Gastrocnemius medialis (tissue), 4 donors: ENCODE measurements at regions of chr21 and their contacts with region 1.

Region 1: GRCh38 chr21:42456457-42456856 is 39.6 kb downstream of the RSPH1 start:
- DNase-seq: no peak
- ATAC-seq: no peak
- H3K4me3 ChIP-seq: no peak overlapping the region
- H3K27ac ChIP-seq: no peak overlapping the region
- H3K4me1 ChIP-seq: no peaks in the 10 kb centered on the region
- H3K27me3 ChIP-seq: peaks cover 0 to 7% (median 0%) of the 10 kb centered on the region in 3 donors
- CTCF ChIP-seq: no peak
- POLR2A ChIP-seq: no peak

Region 2: DNA sequence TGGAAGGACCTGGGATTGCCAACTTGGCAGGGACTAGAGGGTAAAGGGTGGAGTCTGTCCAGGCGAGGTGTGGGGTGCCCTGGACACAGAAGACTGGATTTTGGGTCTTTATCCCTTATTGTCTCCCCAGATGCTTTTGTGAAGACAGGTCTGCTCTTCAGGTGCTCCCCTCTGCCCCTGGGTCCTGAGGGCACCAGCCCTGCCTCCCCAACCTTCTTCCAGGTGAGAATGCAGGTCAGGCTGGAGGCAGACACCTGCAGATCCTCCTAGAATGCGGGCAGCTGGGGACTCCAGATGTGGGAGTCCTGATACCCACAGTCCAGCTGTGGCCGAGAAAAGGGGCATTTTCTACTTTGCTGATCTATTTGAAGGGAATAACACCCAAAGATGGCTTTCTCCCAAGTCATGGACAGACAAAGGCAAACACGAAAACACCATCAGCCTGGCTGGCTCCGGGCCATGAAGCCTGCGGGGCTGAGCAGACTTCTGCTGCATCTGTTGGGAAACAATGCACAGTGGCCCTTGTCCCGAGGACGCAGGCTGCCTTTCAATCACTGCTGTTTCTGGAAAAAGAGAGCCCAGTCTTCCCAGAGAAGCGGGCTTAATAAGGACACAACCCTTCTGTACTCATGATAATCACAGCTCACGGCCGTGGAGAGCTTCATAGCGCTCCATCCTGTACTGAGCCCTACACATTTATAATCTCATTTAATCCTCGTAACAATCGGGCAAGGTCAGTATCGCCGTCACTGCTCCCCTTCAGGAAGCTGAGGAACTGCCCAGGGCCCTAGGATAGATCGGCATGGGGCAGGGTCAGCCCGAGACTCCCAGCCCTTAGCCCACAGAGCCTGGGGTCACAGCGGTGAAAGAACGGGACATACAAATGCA is 299.5 kb before region 1 on chr21:
- in situ Hi-C with region 1: loop called in 1 of 4 experiments (anchors 10 kb)
- intact Hi-C with region 1: no loop called
- DNase-seq: no peak
- ATAC-seq: peak in 1 of 2 donors; percentile 18
- H3K4me3 ChIP-seq: no peak overlapping the region
- H3K27ac ChIP-seq: no peak overlapping the region
- H3K4me1 ChIP-seq: peaks cover 0 to 5% of the 10 kb centered on the region in 2 donors
- H3K27me3 ChIP-seq: no peaks in the 10 kb centered on the region
- CTCF ChIP-seq: no peak
- POLR2A ChIP-seq: no peak

Region 3: DNA sequence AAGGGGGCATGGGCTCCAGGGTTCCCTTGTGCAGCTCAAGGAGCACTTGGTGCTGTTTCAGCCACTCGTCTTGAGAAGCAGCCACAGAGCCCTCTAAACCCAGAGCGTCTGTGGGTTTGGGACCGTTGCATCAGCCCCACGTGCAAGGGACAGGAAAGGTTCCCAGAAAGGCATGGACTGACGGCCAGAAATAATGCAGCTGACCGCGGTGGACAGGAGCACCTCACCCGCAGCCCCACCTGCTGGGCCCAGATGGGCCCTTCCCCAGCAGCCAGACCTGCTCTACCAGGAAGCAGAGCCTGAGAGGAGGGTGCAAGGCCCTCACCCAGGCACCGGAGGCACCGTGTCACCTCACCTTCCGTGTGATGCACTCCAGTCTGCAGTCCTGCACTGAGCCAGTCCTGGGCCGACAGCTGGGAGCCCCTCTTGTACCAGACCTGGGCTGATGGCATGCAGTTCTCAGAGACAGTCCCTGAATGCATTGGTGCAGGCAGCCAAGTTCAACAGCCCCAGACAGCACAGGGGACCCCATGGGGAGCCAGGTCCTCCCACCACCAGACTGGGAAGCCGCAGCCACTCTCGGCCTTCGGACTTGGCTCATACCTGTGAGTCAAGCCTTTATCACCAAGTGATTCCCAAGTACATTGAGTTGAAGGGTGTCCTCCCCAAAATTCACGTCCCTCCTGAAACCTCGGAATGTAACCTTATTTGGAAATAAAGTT is 136.4 kb before region 1 on chr21:
- in situ Hi-C with region 1: no loop called
- intact Hi-C with region 1: loop called (anchors 10 kb)
- DNase-seq: no peak
- ATAC-seq: no peak
- H3K4me3 ChIP-seq: no peak overlapping the region
- H3K27ac ChIP-seq: no peak overlapping the region
- H3K4me1 ChIP-seq: no peaks in the 10 kb centered on the region
- H3K27me3 ChIP-seq: no peaks in the 10 kb centered on the region
- CTCF ChIP-seq: no peak
- POLR2A ChIP-seq: no peak